Caco-2 (cell line): ENCODE measurements at regions of chr1 and their contacts with region 1.

Region 1: GRCh38 chr1:174159252-174160108 is at the start of gene RABGAP1L:
- DNase-seq: peak; percentile 95
- H3K4me3 ChIP-seq: peak within 1 kb of the TSS; percentile 98
- H3K4me3 Mint-ChIP-seq: peak within 1 kb of the TSS; percentile 87
- H3K27ac Mint-ChIP-seq: peak within 1 kb of the TSS; percentile 50
- H3K4me1 ChIP-seq: peaks cover 12% of the 10 kb centered on the region
- H3K4me1 Mint-ChIP-seq: peaks cover 16% of the 10 kb centered on the region
- H3K27me3 ChIP-seq: no peaks in the 10 kb centered on the region
- H3K27me3 Mint-ChIP-seq: no peaks in the 10 kb centered on the region
- CTCF ChIP-seq: no peak
- total RNA-seq, gene RABGAP1L: 20.3 and 20.4 TPM in 2 replicates

Region 2: GRCh38 chr1:173925306-173926242 is 233.9 kb before region 1 on chr1:
- CTCF ChIA-PET with region 1: no interaction called
- POLR2A ChIA-PET with region 1: no interaction called
- intact Hi-C with region 1: no loop called
- DNase-seq: peak in 1 of 2 experiments; percentile 19
- H3K4me3 ChIP-seq: no peak overlapping the region
- H3K4me3 Mint-ChIP-seq: no peak overlapping the region
- H3K27ac Mint-ChIP-seq: peak overlapping the region; percentile 16
- H3K4me1 ChIP-seq: peaks cover 11% of the 10 kb centered on the region
- H3K4me1 Mint-ChIP-seq: peaks cover 7% of the 10 kb centered on the region
- H3K27me3 ChIP-seq: no peaks in the 10 kb centered on the region
- H3K27me3 Mint-ChIP-seq: no peaks in the 10 kb centered on the region
- CTCF ChIP-seq: no peak

Region 3: DNA sequence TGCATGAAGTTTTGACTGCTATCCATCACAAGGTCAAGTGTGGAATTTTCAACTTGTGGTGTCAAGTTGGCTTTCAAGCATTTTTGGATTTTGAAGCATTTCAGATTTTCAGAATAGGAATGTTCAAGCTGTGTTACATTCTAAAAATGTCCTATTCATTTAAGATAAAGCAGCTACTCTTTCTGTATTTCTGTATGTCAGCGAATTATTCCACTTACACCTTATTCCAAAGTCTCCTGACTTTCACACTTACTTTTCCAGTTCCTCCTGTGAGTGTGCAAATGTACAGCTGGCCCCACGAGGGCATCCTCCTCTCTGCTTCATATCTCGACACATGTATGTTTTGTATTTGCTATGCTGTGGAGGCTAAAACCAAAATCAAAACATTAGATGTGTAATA is 189.2 kb before region 1 on chr1:
- CTCF ChIA-PET with region 1: interaction called, 10 read pairs
- POLR2A ChIA-PET with region 1: no interaction called
- intact Hi-C with region 1: no loop called
- DNase-seq: no peak
- H3K4me3 ChIP-seq: no peak overlapping the region
- H3K4me3 Mint-ChIP-seq: no peak overlapping the region
- H3K27ac Mint-ChIP-seq: no peak overlapping the region
- H3K4me1 ChIP-seq: no peaks in the 10 kb centered on the region
- H3K4me1 Mint-ChIP-seq: peaks cover 6% of the 10 kb centered on the region
- H3K27me3 ChIP-seq: no peaks in the 10 kb centered on the region
- H3K27me3 Mint-ChIP-seq: no peaks in the 10 kb centered on the region
- CTCF ChIP-seq: no peak

Region 4: GRCh38 chr1:174114788-174115448 is 44.6 kb before region 1 on chr1:
- CTCF ChIA-PET with region 1: interaction called, 4 read pairs
- POLR2A ChIA-PET with region 1: no interaction called
- intact Hi-C with region 1: loop called (anchors 2 kb)
- DNase-seq: peak; percentile 69 to 78
- H3K4me3 ChIP-seq: no peak overlapping the region
- H3K4me3 Mint-ChIP-seq: no peak overlapping the region
- H3K27ac Mint-ChIP-seq: no peak overlapping the region
- H3K4me1 ChIP-seq: 0 out of 2 replicates have a peak, but pooled peaks cover 4% of the 10 kb centered on the region
- H3K4me1 Mint-ChIP-seq: peaks cover 8% of the 10 kb centered on the region
- H3K27me3 ChIP-seq: no peaks in the 10 kb centered on the region
- H3K27me3 Mint-ChIP-seq: no peaks in the 10 kb centered on the region
- CTCF ChIP-seq: peak; percentile 69 to 77

Region 5: DNA sequence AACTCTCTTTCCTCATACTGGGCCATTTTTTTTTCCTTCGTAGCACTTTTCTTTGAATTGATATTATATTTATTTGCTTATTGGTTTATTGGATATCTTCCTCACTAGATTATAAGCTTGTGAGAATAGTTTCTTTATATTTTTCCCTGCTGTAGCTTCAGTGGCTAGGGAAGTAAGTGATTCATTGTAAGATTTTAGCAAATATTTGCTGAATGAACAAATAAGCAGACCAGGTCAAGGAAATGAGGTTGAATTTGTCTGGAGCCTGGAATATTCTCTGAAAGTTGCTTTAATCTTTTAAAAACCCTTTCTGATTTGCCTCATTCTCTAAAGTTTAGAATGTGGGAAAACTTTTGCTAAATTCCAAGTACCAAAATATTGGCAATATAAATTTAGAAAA is 80.1 kb after region 1 on chr1:
- CTCF ChIA-PET with region 1: no interaction called
- POLR2A ChIA-PET with region 1: no interaction called
- intact Hi-C with region 1: loop called (anchors 5 kb)
- DNase-seq: no peak
- H3K4me3 ChIP-seq: peak overlapping the region; percentile 41
- H3K4me3 Mint-ChIP-seq: peak overlapping the region; percentile 83
- H3K27ac Mint-ChIP-seq: peak overlapping the region; percentile 94
- H3K4me1 ChIP-seq: peaks cover 8% of the 10 kb centered on the region; the same call in 1 of the 2 replicates
- H3K4me1 Mint-ChIP-seq: peaks cover 6% of the 10 kb centered on the region
- H3K27me3 ChIP-seq: no peaks in the 10 kb centered on the region
- H3K27me3 Mint-ChIP-seq: no peaks in the 10 kb centered on the region
- CTCF ChIP-seq: no peak